OCI-LY7 (cell line): ENCODE measurements at regions of chr1 and their contacts with region 1.

Region 1: DNA sequence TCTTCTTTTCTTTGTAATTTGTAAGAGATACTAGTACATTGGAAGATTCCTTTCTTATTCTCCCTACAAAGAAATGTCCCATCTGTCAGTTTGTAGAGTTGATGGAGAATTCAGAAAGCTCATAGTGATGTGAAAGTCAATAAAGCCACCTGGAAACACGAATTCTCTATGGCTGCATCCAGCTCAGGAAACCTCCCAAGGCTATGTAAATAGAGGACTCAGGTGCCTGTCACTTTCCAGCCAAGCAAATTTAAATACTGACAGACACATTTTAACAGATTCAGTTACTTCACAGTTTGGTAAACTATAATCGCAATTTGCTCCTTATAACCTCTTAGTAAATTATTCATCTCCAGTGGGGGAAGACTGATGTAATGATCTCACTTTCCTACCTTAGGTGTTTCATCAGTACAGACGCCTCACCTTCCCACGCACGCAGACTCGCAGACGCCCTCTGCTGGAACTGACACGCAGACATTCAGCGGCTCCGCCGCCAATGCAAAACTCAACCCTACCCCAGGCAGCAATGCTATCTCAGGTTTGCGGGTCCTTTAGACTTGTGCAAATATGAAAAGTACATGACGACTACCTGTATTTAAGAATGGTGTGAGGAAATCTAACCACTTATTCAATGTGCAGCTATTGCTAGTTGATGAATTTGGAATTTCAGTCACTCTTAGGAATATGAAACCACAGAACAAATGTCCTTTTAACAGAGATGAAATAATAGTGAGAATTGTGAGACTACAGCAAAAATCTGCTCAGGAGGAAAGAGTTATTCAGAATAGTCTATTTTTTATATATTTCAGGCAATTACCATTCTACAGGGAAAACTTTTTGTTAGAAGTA is 60.6 kb downstream of the PTPRC start:
- DNase-seq: no peak
- H3K4me3 ChIP-seq: no peak overlapping the region
- H3K27ac ChIP-seq: no peak overlapping the region
- H3K4me1 ChIP-seq: peaks cover 52% of the 10 kb centered on the region
- CTCF ChIP-seq: peak; percentile 76

Region 2: GRCh38 chr1:198520524-198521254 is 178.7 kb before region 1 on chr1:
- CTCF ChIA-PET with region 1: no interaction called
- POLR2A ChIA-PET with region 1: no interaction called
- intact Hi-C with region 1: loop called (anchors 5 kb)
- DNase-seq: no peak
- H3K4me3 ChIP-seq: no peak overlapping the region
- H3K27ac ChIP-seq: no peak overlapping the region
- H3K4me1 ChIP-seq: peaks cover 32% of the 10 kb centered on the region
- CTCF ChIP-seq: no peak

Region 3: DNA sequence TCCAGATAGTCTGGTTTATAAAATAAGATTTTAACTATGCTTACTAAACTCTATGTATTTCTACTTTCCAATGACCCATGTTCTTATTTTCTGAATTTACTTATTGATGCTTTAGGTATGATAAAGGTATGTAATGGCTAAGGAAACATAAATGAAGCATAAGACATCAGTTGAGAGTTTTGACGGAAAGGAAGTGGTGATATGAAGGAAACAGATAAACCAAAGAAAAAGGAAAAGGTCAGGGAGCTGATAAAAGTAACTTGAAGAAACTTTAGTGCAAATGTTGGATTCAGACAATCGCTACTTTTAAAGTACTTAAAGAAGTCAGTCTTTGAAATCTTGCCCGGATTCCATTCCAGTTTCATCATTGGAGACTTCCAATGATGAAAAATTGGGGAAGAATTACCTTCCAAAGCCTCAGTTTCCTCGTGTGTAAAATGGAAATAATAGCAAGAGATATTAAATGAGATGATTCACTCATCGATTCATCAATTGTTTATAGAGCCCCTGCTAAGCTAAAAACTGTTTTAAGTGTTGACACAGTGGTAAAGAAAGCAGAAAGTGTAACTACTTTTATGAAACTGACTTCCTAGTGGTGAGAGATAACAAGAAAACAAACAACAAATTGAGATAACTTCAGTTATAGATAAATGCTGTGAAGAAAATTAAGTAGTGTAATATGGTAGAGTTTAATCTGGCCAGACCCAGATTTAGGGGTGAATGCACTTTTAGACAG is 50.0 kb before region 1 on chr1:
- CTCF ChIA-PET with region 1: no interaction called
- POLR2A ChIA-PET with region 1: no interaction called
- intact Hi-C with region 1: no loop called
- DNase-seq: no peak
- H3K4me3 ChIP-seq: peak overlapping the region; percentile 5
- H3K27ac ChIP-seq: peak overlapping the region; percentile 87
- H3K4me1 ChIP-seq: peaks cover 98% of the 10 kb centered on the region
- CTCF ChIP-seq: no peak

Region 4: DNA sequence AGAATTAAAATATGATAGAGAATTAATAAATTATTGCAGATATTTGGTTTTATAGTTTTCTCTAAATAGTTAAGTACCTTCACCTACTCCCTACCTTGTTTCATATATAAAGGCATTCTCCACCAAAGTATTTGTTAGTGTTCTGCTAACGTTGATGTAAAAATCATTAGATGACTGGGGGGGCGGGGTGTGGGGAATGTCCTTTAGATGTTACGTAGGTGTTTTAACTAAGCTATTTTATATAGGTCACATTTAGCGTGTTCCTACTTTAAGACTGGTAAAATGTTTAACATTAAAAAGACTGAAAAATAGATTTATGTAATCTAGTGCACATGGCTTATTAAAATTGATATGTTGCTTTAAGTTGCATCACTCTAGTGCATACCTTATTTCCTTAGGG is 12.0 kb before region 1 on chr1:
- CTCF ChIA-PET with region 1: interaction called, 5 read pairs
- POLR2A ChIA-PET with region 1: interaction called, 44 read pairs
- intact Hi-C with region 1: no loop called
- DNase-seq: no peak
- H3K4me3 ChIP-seq: no peak overlapping the region
- H3K27ac ChIP-seq: no peak overlapping the region
- H3K4me1 ChIP-seq: peaks cover 57% of the 10 kb centered on the region
- CTCF ChIP-seq: no peak

Region 5: GRCh38 chr1:198723127-198723526 is 23.7 kb after region 1 on chr1:
- CTCF ChIA-PET with region 1: no interaction called
- POLR2A ChIA-PET with region 1: interaction called, 16 read pairs
- intact Hi-C with region 1: no loop called
- DNase-seq: no peak
- H3K4me3 ChIP-seq: no peak overlapping the region
- H3K27ac ChIP-seq: no peak overlapping the region
- H3K4me1 ChIP-seq: no peaks in the 10 kb centered on the region
- CTCF ChIP-seq: no peak

Region 6: DNA sequence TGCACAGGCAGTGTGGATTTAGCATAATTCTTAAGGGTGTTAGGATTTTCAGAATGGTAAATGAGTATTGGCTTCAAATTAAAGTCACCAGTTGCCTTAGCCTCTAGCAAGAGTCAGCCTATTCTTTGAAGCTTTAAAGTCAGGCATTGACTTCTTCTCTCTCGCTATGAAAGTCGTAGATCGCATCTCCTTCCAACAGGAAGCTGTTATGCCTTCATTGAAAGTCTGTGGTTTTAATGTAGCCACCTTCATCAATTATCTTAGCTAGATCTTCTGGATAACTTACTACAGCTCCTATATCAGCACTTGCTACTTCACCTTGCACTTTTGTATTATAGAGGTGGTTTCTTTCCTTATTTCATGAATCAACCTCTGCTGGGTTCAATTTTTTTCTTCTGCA is 259.6 kb after region 1 on chr1:
- CTCF ChIA-PET with region 1: no interaction called
- POLR2A ChIA-PET with region 1: no interaction called
- intact Hi-C with region 1: no loop called
- DNase-seq: no peak
- H3K4me3 ChIP-seq: no peak overlapping the region
- H3K27ac ChIP-seq: no peak overlapping the region
- H3K4me1 ChIP-seq: no peaks in the 10 kb centered on the region
- CTCF ChIP-seq: no peak